ENCODE measurements at regions of chr15 and their contacts with region 1.

Region 1: DNA sequence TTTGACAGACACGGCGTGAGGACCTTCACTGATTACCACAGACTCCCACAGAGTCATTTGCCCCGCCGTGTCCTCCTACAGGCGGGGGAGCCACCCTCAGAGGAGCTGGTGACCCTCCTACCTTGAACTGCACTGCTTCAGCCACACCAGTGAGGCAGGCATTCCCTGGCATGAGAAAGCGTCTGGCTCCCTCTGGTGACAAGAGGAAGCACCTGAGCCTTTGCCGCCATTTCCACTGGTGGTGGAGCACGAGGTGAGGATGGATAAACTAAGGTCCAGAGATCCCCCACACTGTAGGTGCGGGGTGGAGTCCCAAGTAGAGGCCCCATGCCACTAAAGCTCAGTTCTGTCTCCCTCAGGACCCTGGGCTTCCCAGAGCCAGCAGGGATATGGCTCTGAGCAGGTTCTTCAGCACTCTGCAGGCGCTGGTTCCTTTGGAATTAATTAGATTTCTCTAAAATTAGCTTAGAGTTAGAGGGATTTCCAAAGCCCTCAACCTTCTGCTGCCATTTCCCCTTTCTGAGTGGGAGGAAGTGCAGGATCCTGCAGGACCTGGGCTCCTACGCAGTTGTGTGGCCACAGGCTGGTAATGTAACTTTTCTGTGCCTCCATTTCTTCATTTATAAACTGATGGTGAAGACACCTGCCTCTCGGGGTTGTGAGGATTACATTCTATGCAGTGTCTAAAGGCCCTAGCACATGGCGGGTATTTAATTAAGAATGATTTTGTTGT is 224.0 kb downstream of the SLCO3A1 start:
- DNase-seq: peak; percentile 59
- H3K4me3 ChIP-seq: no peak overlapping the region
- H3K27ac ChIP-seq: no peak overlapping the region
- H3K4me1 ChIP-seq: no peaks in the 10 kb centered on the region
- H3K27me3 ChIP-seq: no peaks in the 10 kb centered on the region
- CTCF ChIP-seq: peak; percentile 84 to 89

Region 2: DNA sequence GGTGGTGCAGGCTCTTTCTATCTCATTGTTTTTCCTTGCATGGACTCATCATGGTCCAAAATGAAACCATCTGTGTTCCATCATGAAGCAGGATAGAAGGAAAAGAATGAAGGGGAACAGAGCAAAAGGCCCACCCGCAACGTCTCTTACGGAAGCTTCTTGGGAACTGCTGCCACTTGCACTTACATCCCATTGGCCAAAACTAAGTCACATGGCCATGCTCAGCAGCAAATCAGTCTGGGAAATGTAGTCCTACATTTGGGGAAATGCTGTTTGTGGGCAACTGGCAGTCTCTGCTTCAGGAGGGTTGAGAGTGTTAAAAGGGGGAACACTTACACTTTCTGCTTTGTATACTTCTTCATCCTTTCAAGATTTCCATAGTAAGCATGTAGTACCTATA is 785.8 kb before region 1 on chr15:
- CTCF ChIA-PET with region 1: no interaction called
- dilution Hi-C with region 1: no loop called
- in situ Hi-C with region 1: loop called in 1 of 2 experiments (anchors 10 kb)
- intact Hi-C with region 1: no loop called
- DNase-seq: no peak
- H3K4me3 ChIP-seq: no peak overlapping the region
- H3K27ac ChIP-seq: no peak overlapping the region
- H3K4me1 ChIP-seq: no peaks in the 10 kb centered on the region
- H3K27me3 ChIP-seq: no peaks in the 10 kb centered on the region
- CTCF ChIP-seq: no peak

Region 3: DNA sequence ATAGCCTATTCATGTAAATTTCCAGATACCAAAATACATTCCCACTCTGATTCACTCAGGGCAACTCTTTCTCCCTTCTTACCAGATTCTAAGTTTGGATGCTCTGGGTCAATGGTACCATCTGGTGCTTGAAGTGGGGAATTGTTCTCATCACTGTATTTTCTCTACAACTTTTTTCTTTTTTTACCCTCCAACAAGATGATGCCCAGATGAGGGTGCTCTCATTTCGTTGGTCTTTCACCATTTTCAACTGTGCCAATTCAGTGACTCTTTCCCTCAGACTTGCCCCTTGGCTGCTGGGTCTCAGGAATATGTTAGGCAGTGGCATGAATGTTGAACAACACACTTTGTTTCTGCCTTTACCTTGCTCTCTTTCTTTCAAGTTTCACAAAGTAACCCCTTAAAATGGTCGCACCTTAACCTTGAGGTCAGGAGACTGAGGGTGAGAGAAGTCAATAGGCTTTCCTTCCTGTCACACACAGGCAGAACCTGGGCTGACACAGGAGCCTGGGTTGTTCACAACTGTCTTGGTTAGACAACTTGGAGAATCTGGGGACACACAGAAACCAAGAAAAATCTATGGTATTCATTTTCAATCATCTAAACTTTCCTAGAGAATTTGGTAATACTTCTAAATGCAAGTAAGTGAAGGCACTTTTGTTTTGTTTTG is 554.7 kb before region 1 on chr15:
- CTCF ChIA-PET with region 1: no interaction called
- dilution Hi-C with region 1: no loop called
- in situ Hi-C with region 1: no loop called
- intact Hi-C with region 1: loop called (anchors 5 kb)
- DNase-seq: peak; percentile 66
- H3K4me3 ChIP-seq: no peak overlapping the region
- H3K27ac ChIP-seq: no peak overlapping the region
- H3K4me1 ChIP-seq: no peaks in the 10 kb centered on the region
- H3K27me3 ChIP-seq: no peaks in the 10 kb centered on the region
- CTCF ChIP-seq: peak; percentile 51 to 91

Region 4: GRCh38 chr15:91852741-91853510 is 224.6 kb before region 1 on chr15:
- CTCF ChIA-PET with region 1: no interaction called
- dilution Hi-C with region 1: loop called (anchors 25 kb)
- in situ Hi-C with region 1: loop called in 1 of 2 experiments (anchors 5 kb)
- intact Hi-C with region 1: loop called (anchors 1 kb)
- DNase-seq: peak; percentile 67
- H3K4me3 ChIP-seq: peak overlapping the region; percentile 72 to 77 (median 75)
- H3K27ac ChIP-seq: peak overlapping the region; percentile 70
- H3K4me1 ChIP-seq: peaks cover 26% of the 10 kb centered on the region
- H3K27me3 ChIP-seq: no peaks in the 10 kb centered on the region
- CTCF ChIP-seq: peak; percentile 36 to 66

Region 5: GRCh38 chr15:91942676-91943576 is 134.6 kb before region 1 on chr15:
- CTCF ChIA-PET with region 1: no interaction called
- dilution Hi-C with region 1: loop called (anchors 5 kb)
- in situ Hi-C with region 1: no loop called
- intact Hi-C with region 1: loop called (anchors 1 kb)
- DNase-seq: peak; percentile 99
- H3K4me3 ChIP-seq: peak overlapping the region in 1 of 3 experiments; percentile 5
- H3K27ac ChIP-seq: peak overlapping the region; percentile 96
- H3K4me1 ChIP-seq: peaks cover 58% of the 10 kb centered on the region
- H3K27me3 ChIP-seq: no peaks in the 10 kb centered on the region
- CTCF ChIP-seq: no peak

Region 6: GRCh38 chr15:91973481-91973880 is 104.0 kb before region 1 on chr15:
- CTCF ChIA-PET with region 1: no interaction called
- dilution Hi-C with region 1: no loop called
- in situ Hi-C with region 1: no loop called
- intact Hi-C with region 1: loop called (anchors 1 kb)
- DNase-seq: peak; percentile 82
- H3K4me3 ChIP-seq: no peak overlapping the region
- H3K27ac ChIP-seq: peak overlapping the region; percentile 79
- H3K4me1 ChIP-seq: peaks cover 32% of the 10 kb centered on the region
- H3K27me3 ChIP-seq: no peaks in the 10 kb centered on the region
- CTCF ChIP-seq: peak; percentile 35 to 69